ENCODE measurements at regions of chr7 and their contacts with region 1.

Region 1: GRCh38 chr7:121530227-121531174 is 134.4 kb upstream of the FAM3C start:
- DNase-seq: peak; percentile 84
- H3K4me3 ChIP-seq: no peak overlapping the region
- H3K27ac ChIP-seq: peak overlapping the region; percentile 85
- H3K4me1 ChIP-seq: peaks cover 20% of the 10 kb centered on the region
- H3K27me3 ChIP-seq: no peaks in the 10 kb centered on the region
- CTCF ChIP-seq: no peak
- POLR2A ChIP-seq: no peak

Region 2: DNA sequence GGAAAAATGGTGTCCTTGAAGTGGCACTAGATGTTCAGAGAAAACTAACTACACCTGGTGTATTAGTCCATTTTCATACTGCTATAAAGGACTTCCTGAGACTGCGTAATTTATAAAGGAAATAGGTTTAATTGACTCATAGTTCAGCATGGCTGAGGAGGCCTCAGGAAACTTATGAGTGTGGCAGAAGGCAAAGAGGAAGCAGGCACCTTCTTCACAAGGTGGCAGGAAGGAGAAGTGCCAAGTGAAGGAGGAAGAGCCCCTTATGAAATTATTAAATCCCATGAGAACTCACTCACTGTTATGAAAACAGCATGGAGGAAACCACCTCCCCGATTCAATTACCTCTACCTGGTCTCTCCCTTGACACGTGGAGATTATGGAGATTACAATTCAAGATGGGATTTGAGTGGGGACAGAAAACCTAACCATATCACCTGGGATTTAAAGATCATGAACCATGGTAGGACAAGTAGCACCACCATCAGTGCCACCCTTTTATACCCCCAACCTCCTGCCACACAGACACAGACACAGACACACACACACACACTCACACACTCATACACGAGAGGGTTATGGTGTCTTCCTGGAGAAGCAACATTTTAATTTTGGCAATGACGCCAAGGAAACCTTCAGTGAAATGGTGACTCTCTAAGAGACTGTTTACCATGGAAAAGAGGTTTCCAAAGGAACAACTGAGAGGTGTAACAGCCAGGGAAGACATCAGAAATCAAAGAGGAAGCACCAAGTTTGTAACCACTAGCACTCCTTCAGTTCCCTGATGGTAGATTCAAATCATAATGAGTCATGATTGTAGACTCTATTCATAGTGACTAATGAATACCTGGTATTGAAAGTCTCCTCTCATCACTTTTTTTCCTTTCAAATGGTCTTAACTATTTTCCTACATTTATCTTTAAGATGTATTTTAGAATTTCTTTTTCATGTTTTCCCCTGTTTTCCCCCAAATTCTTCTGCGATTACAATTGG is 243.5 kb before region 1 on chr7:
- CTCF ChIA-PET with region 1: no interaction called
- POLR2A ChIA-PET with region 1: no interaction called
- dilution Hi-C with region 1: no loop called
- intact Hi-C with region 1: no loop called
- DNase-seq: no peak
- H3K4me3 ChIP-seq: no peak overlapping the region
- H3K27ac ChIP-seq: no peak overlapping the region
- H3K4me1 ChIP-seq: no peaks in the 10 kb centered on the region
- H3K27me3 ChIP-seq: no peaks in the 10 kb centered on the region
- CTCF ChIP-seq: no peak
- POLR2A ChIP-seq: no peak

Region 3: DNA sequence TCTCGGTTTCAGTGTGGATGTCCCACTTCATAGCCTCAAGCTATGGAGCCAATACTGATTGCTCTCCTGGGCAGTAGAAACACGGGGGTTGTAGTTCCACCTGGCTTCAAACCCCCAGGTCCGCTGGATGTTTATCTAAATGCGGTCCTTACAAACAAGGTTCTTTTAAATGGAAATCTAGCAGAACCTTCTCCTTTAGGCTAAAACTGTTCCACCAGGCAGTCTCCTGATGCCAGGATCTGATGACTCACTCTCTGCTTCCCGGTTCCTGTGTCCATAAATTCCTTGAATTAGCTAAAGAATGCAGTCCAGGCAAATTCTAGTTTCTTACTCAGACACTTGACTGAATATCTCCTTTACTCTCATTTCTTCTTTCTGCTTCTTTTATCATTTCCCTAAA is 26.0 kb before region 1 on chr7:
- CTCF ChIA-PET with region 1: interaction called, 3 read pairs
- POLR2A ChIA-PET with region 1: no interaction called
- dilution Hi-C with region 1: no loop called
- intact Hi-C with region 1: loop called (anchors 2 kb)
- DNase-seq: peak; percentile 83
- H3K4me3 ChIP-seq: peak overlapping the region in 1 of 3 experiments; percentile 8
- H3K27ac ChIP-seq: peak overlapping the region; percentile 86
- H3K4me1 ChIP-seq: peaks cover 9% of the 10 kb centered on the region
- H3K27me3 ChIP-seq: no peaks in the 10 kb centered on the region
- CTCF ChIP-seq: no peak
- POLR2A ChIP-seq: no peak